ENCODE measurements at regions of chr9 and their contacts with region 1.

Region 1: GRCh38 chr9:69759421-69760277 is at the start of gene PTAR1:
- DNase-seq: peak; percentile 93 to 96
- ATAC-seq: peak; percentile 95 to 98 (median 96)
- H3K4me3 ChIP-seq: peak within 1 kb of the TSS; percentile 94
- H3K27ac ChIP-seq: peak within 1 kb of the TSS; percentile 98
- H3K4me1 ChIP-seq: peaks cover 29% of the 10 kb centered on the region
- H3K27me3 ChIP-seq: no peaks in the 10 kb centered on the region
- CTCF ChIP-seq: no peak
- total RNA-seq, gene PTAR1: 24.0 to 27.9 (median 26.3) TPM

Region 2: GRCh38 chr9:69672596-69673310 is 86.9 kb before region 1 on chr9:
- intact Hi-C with region 1: loop called (anchors 10 kb)
- DNase-seq: peak; percentile 84 to 92
- ATAC-seq: peak; percentile 91 to 94 (median 94)
- H3K4me3 ChIP-seq: peak overlapping the region; percentile 78
- H3K27ac ChIP-seq: peak overlapping the region; percentile 65
- H3K4me1 ChIP-seq: peaks cover 3% of the 10 kb centered on the region
- H3K27me3 ChIP-seq: no peaks in the 10 kb centered on the region
- CTCF ChIP-seq: peak; percentile 89

Region 3: GRCh38 chr9:69689991-69690538 is 69.6 kb before region 1 on chr9:
- intact Hi-C with region 1: no loop called
- DNase-seq: no peak
- ATAC-seq: no peak
- H3K4me3 ChIP-seq: no peak overlapping the region
- H3K27ac ChIP-seq: no peak overlapping the region
- H3K4me1 ChIP-seq: no peaks in the 10 kb centered on the region
- H3K27me3 ChIP-seq: no peaks in the 10 kb centered on the region
- CTCF ChIP-seq: no peak

Region 4: DNA sequence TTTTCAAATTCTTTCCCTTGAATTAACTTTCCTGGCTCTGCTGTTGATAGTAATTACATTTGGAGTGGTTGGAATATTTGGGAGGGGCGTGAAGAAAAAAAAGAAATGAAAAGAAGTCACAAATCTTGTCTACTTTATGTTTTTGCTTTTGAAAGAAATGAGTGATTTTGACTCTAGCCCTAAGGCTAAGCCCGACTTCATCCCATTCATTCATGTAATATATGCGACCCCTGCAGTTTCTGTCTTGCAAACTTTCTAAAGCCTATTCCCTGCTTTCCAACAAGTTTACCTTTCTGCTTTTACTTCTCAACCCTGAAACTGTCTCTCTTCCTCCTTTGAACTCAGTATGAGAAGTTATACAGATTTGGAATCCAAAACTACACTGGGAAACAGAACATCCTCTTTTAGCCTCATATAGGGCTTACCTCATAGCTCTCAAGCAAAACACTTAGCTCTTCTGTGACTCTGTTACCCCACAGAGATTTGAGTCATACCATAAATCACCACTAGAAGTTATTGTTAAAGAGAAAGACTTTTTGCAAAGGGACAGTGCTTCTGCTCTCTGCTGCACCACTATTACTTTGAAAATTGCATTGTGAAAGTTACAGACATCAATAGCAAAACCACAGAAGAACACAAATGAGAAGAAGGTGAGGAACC is 62.6 kb after region 1 on chr9:
- intact Hi-C with region 1: no loop called
- DNase-seq: no peak
- ATAC-seq: no peak
- H3K4me3 ChIP-seq: no peak overlapping the region
- H3K27ac ChIP-seq: no peak overlapping the region
- H3K4me1 ChIP-seq: no peaks in the 10 kb centered on the region
- H3K27me3 ChIP-seq: peaks cover 0 to 10% (median 6%) of the 10 kb centered on the region in 3 donors
- CTCF ChIP-seq: no peak

Region 5: GRCh38 chr9:69847491-69847890 is 87.8 kb after region 1 on chr9:
- intact Hi-C with region 1: no loop called
- DNase-seq: no peak
- ATAC-seq: no peak
- H3K4me3 ChIP-seq: no peak overlapping the region
- H3K27ac ChIP-seq: no peak overlapping the region
- H3K4me1 ChIP-seq: no peaks in the 10 kb centered on the region
- H3K27me3 ChIP-seq: peaks cover 0 to 3% (median 0%) of the 10 kb centered on the region in 3 donors
- CTCF ChIP-seq: no peak

Region 6: DNA sequence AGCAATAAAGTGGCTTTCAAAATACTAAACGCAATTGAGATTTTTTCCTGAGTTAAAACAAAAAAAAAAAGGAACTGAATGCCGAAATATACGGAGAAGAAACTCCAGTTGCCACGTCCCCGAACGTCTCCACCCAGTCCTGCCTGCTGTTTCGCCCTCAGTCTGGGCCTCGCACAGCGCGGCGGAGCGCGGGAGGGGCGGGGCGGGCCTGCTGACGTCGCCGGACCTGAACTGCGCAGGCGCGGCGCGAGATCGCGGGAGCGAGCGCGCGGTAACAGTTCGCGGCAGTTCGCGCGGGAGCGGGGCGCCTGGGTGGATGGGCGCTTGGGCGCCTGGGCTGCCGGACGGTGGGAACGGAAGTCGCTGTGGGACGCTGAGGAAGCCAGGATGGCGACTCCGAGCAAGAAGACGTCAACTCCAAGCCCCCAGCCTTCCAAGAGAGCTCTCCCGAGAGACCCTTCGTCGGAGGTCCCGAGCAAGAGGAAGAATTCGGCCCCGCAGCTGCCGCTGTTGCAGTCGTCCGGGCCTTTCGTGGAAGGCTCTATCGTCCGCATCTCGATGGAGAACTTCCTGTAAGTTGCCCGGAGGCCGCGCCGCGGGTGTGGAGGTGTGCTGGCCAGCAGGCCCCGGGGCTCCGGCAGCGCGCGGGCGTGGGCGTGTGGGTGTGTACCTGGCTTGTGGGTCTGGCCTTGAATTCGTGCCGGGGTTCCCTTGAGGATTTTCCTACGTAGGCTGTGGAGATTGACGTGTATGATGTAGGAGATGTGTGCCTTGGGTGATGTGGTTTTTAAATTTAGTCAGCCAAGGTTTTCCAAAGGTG is 499.3 kb after region 1 on chr9 and contains the start of gene SMC5:
- intact Hi-C with region 1: loop called in 1 of 2 experiments (anchors 10 kb)
- DNase-seq: peak; percentile 92 to 95
- ATAC-seq: peak; percentile 92 to 94 (median 94)
- H3K4me3 ChIP-seq: peak within 1 kb of the TSS; percentile 78
- H3K27ac ChIP-seq: peak within 1 kb of the TSS; percentile 98
- H3K4me1 ChIP-seq: peaks cover 50% of the 10 kb centered on the region
- H3K27me3 ChIP-seq: no peaks in the 10 kb centered on the region
- CTCF ChIP-seq: no peak
- total RNA-seq, gene SMC5: 18.1 to 21.0 (median 19.9) TPM

Measured in psoas muscle (tissue), 8 donors.